ENCODE measurements at regions of chr7 and their contacts with region 1.

Region 1: GRCh38 chr7:150988230-150989226 is 2.3 kb upstream of the NOS3 start:
- H3K4me3 ChIP-seq: no peak overlapping the region
- H3K27ac ChIP-seq: no peak overlapping the region
- H3K4me1 ChIP-seq: no peaks in the 10 kb centered on the region
- CTCF ChIP-seq: peak; percentile 86

Region 2: GRCh38 chr7:150778738-150779301 is 209.7 kb before region 1 on chr7:
- CTCF ChIA-PET with region 1: interaction called, 13 read pairs
- POLR2A ChIA-PET with region 1: no interaction called
- H3K4me3 ChIP-seq: no peak overlapping the region
- H3K27ac ChIP-seq: no peak overlapping the region
- H3K4me1 ChIP-seq: no peaks in the 10 kb centered on the region
- CTCF ChIP-seq: peak; percentile 52

Region 3: GRCh38 chr7:150962553-150963399 is 25.8 kb before region 1 on chr7:
- CTCF ChIA-PET with region 1: interaction called, 124 read pairs
- POLR2A ChIA-PET with region 1: no interaction called
- H3K4me3 ChIP-seq: no peak overlapping the region
- H3K27ac ChIP-seq: no peak overlapping the region
- H3K4me1 ChIP-seq: no peaks in the 10 kb centered on the region
- CTCF ChIP-seq: peak; percentile 92

Region 4: DNA sequence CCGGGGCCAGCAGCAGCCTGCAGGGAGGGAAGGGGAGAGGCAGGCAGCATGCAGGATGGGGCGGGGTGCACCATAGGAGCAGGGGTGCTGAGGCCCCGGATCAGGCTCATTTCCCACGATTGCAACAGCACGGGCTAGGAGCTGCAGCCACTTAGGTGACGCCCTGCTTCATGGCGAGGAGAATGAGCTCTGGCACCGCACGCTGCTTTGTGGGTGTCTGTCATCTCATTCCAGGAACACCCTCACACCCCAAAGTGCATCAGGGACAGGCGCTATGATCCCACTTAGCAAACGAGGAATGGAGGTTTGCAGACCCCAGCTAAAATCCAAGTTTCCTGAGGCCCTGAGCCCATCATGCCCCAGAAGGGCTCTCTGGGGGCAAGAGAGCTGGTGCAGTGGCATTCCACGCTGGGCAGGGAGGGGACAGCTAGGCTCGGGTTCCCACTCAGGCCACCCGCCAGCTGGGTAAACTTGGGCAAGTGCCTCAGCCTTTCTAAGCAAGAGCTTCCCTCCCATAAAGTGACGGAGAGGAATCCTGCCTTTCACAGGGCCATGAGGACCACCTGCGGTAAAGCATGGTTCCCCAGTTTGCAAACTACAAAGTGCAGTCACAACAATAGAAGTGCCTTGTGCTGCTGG is 19.7 kb before region 1 on chr7:
- CTCF ChIA-PET with region 1: interaction called, 124 read pairs
- POLR2A ChIA-PET with region 1: no interaction called
- H3K4me3 ChIP-seq: no peak overlapping the region
- H3K27ac ChIP-seq: no peak overlapping the region
- H3K4me1 ChIP-seq: no peaks in the 10 kb centered on the region
- CTCF ChIP-seq: no peak

Region 5: GRCh38 chr7:150974468-150975391 is 13.8 kb before region 1 on chr7:
- CTCF ChIA-PET with region 1: interaction called, 124 read pairs
- POLR2A ChIA-PET with region 1: no interaction called
- H3K4me3 ChIP-seq: peak overlapping the region; percentile 51
- H3K27ac ChIP-seq: peak overlapping the region; percentile 32; the same call in 1 of the 2 replicates
- H3K4me1 ChIP-seq: no peaks in the 10 kb centered on the region; the same call in 1 of the 2 replicates
- CTCF ChIP-seq: peak; percentile 80

Region 6: DNA sequence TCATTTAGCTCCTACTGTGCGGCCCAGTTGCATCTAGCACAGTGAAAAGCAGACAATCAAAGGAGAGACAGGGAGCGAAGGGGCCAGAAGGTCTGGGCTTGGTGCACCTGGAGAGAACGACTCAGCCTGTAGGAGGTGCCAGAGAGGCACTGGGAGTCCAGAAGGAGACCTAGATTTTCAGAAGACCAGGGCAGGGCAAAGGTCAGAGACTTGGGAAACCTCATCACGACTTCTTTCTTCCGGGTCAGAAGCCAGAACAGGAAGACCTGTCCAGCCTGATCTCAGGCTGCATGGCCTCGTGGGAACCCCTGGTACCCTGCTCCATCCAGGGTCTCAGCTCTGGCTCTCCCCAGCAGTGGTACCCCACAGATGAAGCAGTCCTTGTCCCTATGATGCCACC is 102.9 kb after region 1 on chr7:
- CTCF ChIA-PET with region 1: no interaction called
- POLR2A ChIA-PET with region 1: no interaction called
- H3K4me3 ChIP-seq: no peak overlapping the region
- H3K27ac ChIP-seq: no peak overlapping the region
- H3K4me1 ChIP-seq: peaks cover 4% of the 10 kb centered on the region; the same call in 1 of the 2 replicates
- CTCF ChIP-seq: peak; percentile 41